ENCODE measurements at regions of chr1 and their contacts with region 1.

Region 1: DNA sequence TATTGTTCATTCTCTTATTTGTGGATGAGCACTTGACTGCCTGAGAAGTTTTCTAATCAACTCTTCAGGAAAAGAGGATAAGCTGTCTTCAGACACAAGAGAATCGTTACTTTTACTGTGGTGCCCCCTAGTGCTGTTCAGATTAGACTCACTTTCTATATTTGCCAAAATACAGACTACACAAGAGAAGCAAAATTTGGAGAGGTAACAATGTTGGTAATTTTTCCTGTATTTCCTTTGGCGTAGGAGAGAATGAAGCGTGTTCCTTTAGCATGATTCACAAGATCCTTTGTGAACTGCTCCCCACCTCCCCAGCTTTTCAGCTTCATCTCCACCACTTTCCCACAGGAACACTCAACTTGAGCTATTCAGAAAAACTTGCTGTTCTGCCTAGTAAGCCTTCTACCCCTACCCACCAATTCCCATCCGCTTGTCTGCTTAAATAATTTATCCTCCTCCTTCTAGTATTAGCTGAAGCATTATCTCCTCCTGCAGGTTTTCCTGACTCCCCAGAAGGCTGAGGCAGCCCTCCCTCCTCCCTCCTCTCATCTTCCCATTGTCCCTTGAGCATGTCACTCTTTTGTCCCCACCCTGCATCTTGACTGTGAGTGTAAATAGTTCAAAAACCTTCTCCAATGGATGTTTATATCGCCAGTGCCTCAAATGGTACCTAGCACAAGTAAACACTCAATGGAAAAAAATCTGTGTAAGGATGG is 4.5 kb downstream of the TNFSF4 start:
- DNase-seq: no peak
- H3K4me3 Mint-ChIP-seq: no peak overlapping the region
- H3K27ac Mint-ChIP-seq: no peak overlapping the region
- H3K4me1 Mint-ChIP-seq: peaks cover 47% of the 10 kb centered on the region
- H3K27me3 Mint-ChIP-seq: peaks cover 16% of the 10 kb centered on the region

Region 2: DNA sequence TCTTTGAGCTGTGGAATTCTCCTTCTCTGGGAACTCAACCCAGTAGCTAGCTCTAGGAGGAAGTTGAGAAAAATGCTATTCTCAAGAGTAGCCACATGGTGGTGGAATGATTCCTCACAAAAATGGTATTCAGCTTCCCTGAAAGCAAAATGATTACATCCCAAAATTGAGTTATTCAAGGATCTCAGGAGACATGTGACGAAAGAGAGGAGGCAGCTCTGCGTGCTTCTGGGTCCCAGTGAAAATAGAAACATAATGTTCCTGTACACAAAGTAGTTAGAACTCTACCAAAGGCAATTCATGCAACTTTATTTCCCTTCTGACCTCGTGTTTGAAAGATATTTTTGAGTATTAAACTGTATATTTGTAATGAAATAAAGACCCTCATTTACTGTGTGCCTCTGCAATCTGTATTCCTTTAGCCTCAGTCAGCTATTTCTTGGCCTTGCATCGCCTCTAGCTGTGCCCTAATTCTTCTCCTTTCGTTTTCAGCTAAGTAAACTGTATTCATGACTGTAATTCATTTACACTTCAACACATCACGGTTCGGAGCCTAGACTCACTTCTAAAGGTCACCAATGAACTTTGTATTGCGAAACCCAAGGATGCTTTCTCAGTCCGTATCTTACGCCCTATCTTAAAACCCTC is 376.4 kb before region 1 on chr1:
- intact Hi-C with region 1: loop called (anchors 2 kb)
- DNase-seq: no peak
- H3K4me3 Mint-ChIP-seq: no peak overlapping the region
- H3K27ac Mint-ChIP-seq: no peak overlapping the region
- H3K4me1 Mint-ChIP-seq: no peaks in the 10 kb centered on the region
- H3K27me3 Mint-ChIP-seq: peaks cover 14% of the 10 kb centered on the region

Region 3: DNA sequence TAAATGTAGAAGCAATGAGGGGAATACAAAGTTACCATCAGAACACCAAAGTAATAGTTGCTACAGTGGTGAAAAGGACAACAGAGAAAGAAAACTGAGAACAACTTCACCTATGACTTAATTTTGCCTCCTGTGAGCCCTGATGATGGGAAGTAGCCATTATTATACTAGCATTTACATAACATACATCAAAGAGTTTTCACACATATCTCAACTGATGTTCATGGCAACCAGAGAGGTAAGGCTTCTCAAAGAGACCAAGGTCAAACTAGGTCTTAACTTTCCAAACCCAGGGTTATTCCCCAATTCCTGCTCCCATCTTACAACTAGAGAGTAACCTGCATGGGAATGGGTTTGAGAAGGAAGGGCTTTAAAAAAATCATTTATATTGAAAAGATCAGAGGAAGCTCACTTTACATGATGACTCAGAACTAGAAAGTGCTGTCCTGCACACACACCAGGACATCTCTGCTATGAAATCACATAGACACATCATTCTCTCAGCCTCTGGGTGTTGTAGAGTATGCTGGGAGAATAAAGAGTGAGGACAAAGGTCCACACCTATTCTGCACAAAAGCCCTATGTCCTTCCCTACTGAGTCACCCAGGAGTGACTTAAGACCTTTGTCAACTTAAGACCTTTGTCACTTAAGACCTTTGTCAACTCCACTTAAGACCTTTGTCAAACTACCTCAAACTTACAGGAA is 331.5 kb before region 1 on chr1:
- intact Hi-C with region 1: loop called (anchors 1 kb)
- DNase-seq: no peak
- H3K4me3 Mint-ChIP-seq: no peak overlapping the region
- H3K27ac Mint-ChIP-seq: no peak overlapping the region
- H3K4me1 Mint-ChIP-seq: peaks cover 32% of the 10 kb centered on the region
- H3K27me3 Mint-ChIP-seq: peaks cover 39% of the 10 kb centered on the region

Region 4: GRCh38 chr1:173222149-173223030 is 19.8 kb after region 1 on chr1:
- intact Hi-C with region 1: loop called (anchors 1 kb)
- DNase-seq: no peak
- H3K4me3 Mint-ChIP-seq: no peak overlapping the region
- H3K27ac Mint-ChIP-seq: peak overlapping the region; percentile 8
- H3K4me1 Mint-ChIP-seq: peaks cover 15% of the 10 kb centered on the region
- H3K27me3 Mint-ChIP-seq: peaks cover 8% of the 10 kb centered on the region

Region 5: GRCh38 chr1:173545688-173546087 is 343.1 kb after region 1 on chr1:
- intact Hi-C with region 1: no loop called
- DNase-seq: no peak
- H3K4me3 Mint-ChIP-seq: no peak overlapping the region
- H3K27ac Mint-ChIP-seq: no peak overlapping the region
- H3K4me1 Mint-ChIP-seq: peaks cover 8% of the 10 kb centered on the region
- H3K27me3 Mint-ChIP-seq: peaks cover 6% of the 10 kb centered on the region

Measured in activated T-helper 1 cell treated with anti-CD3 and anti-CD28 coated beads, Interleukin-12 subunit alpha, Interleukin-12 subunit beta, Interleukin-2, Interleukin-4 antibody, amounts not matched to agents 30 ng/mL and 10 ng/mL and 1 ng/mL, durations not matched to agents 14 hours and 24 hours and 36 hours (primary cell).